Thyroid gland (tissue), 4 donors: ENCODE measurements at regions of chr3 and their contacts with region 1.

Region 1: GRCh38 chr3:43855674-43856299 is 165.0 kb downstream of the ABHD5 start:
- DNase-seq: peak; percentile 64 to 74
- H3K4me3 ChIP-seq: no peak overlapping the region
- H3K27ac ChIP-seq: no peak overlapping the region
- H3K4me1 ChIP-seq: peaks cover 0 to 6% of the 10 kb centered on the region in 2 donors
- H3K27me3 ChIP-seq: no peaks in the 10 kb centered on the region
- CTCF ChIP-seq: peak in 5 of 6 experiments; percentile 27 to 68 (median 50)
- POLR2A ChIP-seq: no peak

Region 2: GRCh38 chr3:44198284-44199269 is 342.8 kb after region 1 on chr3:
- intact Hi-C with region 1: loop called (anchors 10 kb)
- DNase-seq: peak; percentile 80 to 87
- H3K4me3 ChIP-seq: no peak overlapping the region
- H3K27ac ChIP-seq: no peak overlapping the region
- H3K4me1 ChIP-seq: no peaks in the 10 kb centered on the region
- H3K27me3 ChIP-seq: no peaks in the 10 kb centered on the region
- CTCF ChIP-seq: peak; percentile 43 to 92 (median 80)
- POLR2A ChIP-seq: no peak